Motor neuron (in vitro differentiated cells): ENCODE measurements at regions of chr9 and their contacts with region 1.

Region 1: GRCh38 chr9:78566948-78567684 is 270.2 kb downstream of the PSAT1 start:
- ATAC-seq: no peak
- H3K4me3 ChIP-seq: no peak overlapping the region
- H3K27ac ChIP-seq: no peak overlapping the region
- H3K4me1 ChIP-seq: no peaks in the 10 kb centered on the region

Region 2: GRCh38 chr9:78668148-78668825 is 101.2 kb after region 1 on chr9:
- in situ Hi-C with region 1: loop called in 1 of 9 experiments (anchors 25 kb)
- ATAC-seq: no peak
- H3K4me3 ChIP-seq: no peak overlapping the region
- H3K27ac ChIP-seq: no peak overlapping the region
- H3K4me1 ChIP-seq: no peaks in the 10 kb centered on the region